SK-N-SH (cell line): ENCODE measurements at regions of chr1 and their contacts with region 1.

Region 1: GRCh38 chr1:17661546-17662157 is 93.5 kb upstream of the ACTL8 start:
- DNase-seq: peak; percentile 93
- H3K4me3 ChIP-seq: no peak overlapping the region; a peak in 1 of 4 replicates
- H3K27ac ChIP-seq: no peak overlapping the region
- H3K4me1 ChIP-seq: peaks cover 0 to 3% of the 10 kb centered on the region in 2 experiments; a peak in 1 of 4 replicates
- H3K27me3 ChIP-seq: no peaks in the 10 kb centered on the region
- CTCF ChIP-seq: peak; percentile 91
- EP300 ChIP-seq: no peak
- RAD21 ChIP-seq: peak; percentile 94

Region 2: GRCh38 chr1:17569200-17570161 is 92.2 kb before region 1 on chr1:
- CTCF ChIA-PET with region 1: no interaction called
- POLR2A ChIA-PET with region 1: no interaction called
- DNase-seq: peak; percentile 60
- H3K4me3 ChIP-seq: no peak overlapping the region
- H3K27ac ChIP-seq: peak overlapping the region; percentile 81 to 99
- H3K4me1 ChIP-seq: peaks cover 12 to 46% of the 10 kb centered on the region in 2 experiments; a peak in 3 of 4 replicates
- H3K27me3 ChIP-seq: no peaks in the 10 kb centered on the region
- CTCF ChIP-seq: no peak
- EP300 ChIP-seq: no peak
- RAD21 ChIP-seq: no peak

Region 3: GRCh38 chr1:17671741-17672140 is 10.1 kb after region 1 on chr1:
- CTCF ChIA-PET with region 1: interaction called, 52 read pairs
- POLR2A ChIA-PET with region 1: no interaction called
- DNase-seq: peak; percentile 80
- H3K4me3 ChIP-seq: no peak overlapping the region
- H3K27ac ChIP-seq: peak overlapping the region in 1 of 2 experiments; percentile 95; a peak in 2 of 4 replicates
- H3K4me1 ChIP-seq: peaks cover 0 to 59% of the 10 kb centered on the region in 2 experiments; a peak in 2 of 4 replicates
- H3K27me3 ChIP-seq: no peaks in the 10 kb centered on the region
- CTCF ChIP-seq: no peak
- EP300 ChIP-seq: no peak
- RAD21 ChIP-seq: 0 out of 2 replicates have a peak, but pooled peaks have one; percentile 12

Region 4: DNA sequence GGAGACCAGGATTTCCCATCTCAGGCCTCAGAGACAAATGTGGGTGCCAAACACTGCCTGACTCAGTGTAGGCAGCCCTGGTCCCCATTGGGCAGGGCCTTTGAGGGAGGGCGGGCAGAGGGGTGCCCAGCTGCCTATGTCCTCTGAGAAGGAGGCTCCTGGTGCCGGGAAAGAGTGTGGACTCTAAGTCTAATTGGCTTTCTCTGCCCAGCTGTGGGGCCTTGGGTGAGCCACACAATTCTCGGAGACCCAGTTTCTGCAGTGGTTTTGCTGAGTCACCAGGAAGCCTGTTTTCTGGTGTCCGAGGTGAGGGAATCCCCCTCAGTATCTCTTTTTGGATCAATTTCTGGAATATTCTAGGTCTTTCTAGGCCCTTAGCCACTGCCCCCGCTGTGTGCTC is 58.2 kb after region 1 on chr1:
- CTCF ChIA-PET with region 1: interaction called, 11 read pairs
- POLR2A ChIA-PET with region 1: no interaction called
- DNase-seq: no peak
- H3K4me3 ChIP-seq: no peak overlapping the region
- H3K27ac ChIP-seq: no peak overlapping the region
- H3K4me1 ChIP-seq: no peaks in the 10 kb centered on the region; a peak in 1 of 4 replicates
- H3K27me3 ChIP-seq: no peaks in the 10 kb centered on the region
- CTCF ChIP-seq: no peak
- EP300 ChIP-seq: no peak
- RAD21 ChIP-seq: no peak

Region 5: DNA sequence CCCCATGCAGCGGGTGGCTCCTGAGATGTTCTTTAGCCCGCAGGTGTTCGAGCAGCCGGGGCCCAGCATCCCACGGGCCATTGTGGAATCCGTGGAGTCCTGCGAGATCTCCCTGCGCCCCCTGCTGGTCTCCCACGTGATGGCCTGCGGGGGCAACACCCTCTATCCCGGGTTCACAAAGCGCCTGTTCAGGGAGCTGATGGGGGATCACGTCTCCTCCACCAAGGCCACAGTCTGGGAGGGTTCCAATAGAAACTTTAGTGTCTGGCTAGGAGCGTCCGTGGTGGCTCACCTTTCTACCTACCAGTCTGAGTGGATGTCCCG is 164.5 kb after region 1 on chr1:
- CTCF ChIA-PET with region 1: interaction called, 30 read pairs
- POLR2A ChIA-PET with region 1: no interaction called
- DNase-seq: peak; percentile 83
- H3K4me3 ChIP-seq: no peak overlapping the region; a peak in 1 of 4 replicates
- H3K27ac ChIP-seq: no peak overlapping the region
- H3K4me1 ChIP-seq: peaks cover 0 to 13% of the 10 kb centered on the region in 2 experiments; a peak in 2 of 4 replicates
- H3K27me3 ChIP-seq: no peaks in the 10 kb centered on the region
- CTCF ChIP-seq: peak; percentile 62
- EP300 ChIP-seq: no peak
- RAD21 ChIP-seq: peak; percentile 70

Region 6: GRCh38 chr1:17922833-17923232 is 261.2 kb after region 1 on chr1:
- CTCF ChIA-PET with region 1: interaction called, 60 read pairs
- POLR2A ChIA-PET with region 1: no interaction called
- DNase-seq: peak; percentile 71
- H3K4me3 ChIP-seq: no peak overlapping the region; a peak in 1 of 4 replicates
- H3K27ac ChIP-seq: no peak overlapping the region
- H3K4me1 ChIP-seq: peaks cover 0 to 2% of the 10 kb centered on the region in 2 experiments; a peak in 1 of 4 replicates
- H3K27me3 ChIP-seq: no peaks in the 10 kb centered on the region
- CTCF ChIP-seq: peak; percentile 58
- EP300 ChIP-seq: no peak
- RAD21 ChIP-seq: peak; percentile 94

Region 7: DNA sequence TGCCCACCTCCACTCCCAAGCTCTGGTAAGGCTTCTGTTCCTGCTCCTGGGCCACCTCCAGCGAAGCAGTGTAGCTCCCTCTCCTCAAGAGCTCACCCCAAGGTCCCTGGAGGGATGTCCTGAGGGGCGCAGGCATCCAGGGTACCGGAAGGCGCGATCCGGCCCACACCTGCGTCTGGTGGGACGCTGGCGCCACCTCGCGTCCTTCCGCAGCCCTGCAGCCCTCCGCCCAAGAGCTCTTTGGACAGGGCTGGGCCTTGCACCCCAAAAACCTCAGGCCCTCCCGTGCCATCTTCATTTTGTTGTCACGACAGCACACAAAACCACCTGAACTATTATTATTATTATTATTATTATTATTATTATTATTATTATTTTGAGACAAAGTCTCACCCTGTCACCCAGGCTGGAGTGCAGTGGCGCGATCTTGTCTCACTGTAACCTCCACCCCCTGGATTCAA is 919.8 kb after region 1 on chr1:
- CTCF ChIA-PET with region 1: interaction called, 38 read pairs
- POLR2A ChIA-PET with region 1: no interaction called
- DNase-seq: peak; percentile 85
- H3K4me3 ChIP-seq: no peak overlapping the region; a peak in 1 of 4 replicates
- H3K27ac ChIP-seq: no peak overlapping the region
- H3K4me1 ChIP-seq: no peaks in the 10 kb centered on the region; a peak in 1 of 4 replicates
- H3K27me3 ChIP-seq: no peaks in the 10 kb centered on the region
- CTCF ChIP-seq: peak; percentile 65
- EP300 ChIP-seq: no peak
- RAD21 ChIP-seq: peak; percentile 84